H1 (cell line): ENCODE measurements at regions of chr2 and their contacts with region 1.

Region 1: DNA sequence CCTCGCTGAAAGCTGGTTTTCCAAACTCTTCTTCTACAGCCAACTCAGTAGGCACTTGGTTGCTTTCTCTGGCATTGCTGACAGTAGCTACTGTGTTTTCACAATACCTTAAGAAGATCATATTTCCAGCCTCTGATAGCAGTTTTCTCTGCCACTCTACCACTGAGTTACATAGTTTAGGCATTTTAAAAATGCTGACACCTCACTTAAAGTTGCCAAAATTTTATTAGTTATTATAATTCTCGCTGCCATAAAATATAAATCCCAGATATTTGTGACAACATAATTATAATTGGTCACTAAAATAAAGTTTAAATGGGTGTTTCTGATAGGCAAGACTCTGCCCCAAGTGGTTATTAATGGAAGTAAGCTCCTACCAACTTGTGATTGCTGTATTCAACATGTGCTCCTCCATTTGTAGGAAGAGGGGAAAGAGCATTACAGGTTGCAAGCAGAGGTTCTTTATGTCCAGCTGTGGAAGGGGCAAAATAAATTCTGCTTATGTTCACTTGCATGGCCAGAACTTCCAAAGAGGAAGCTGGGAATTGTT is 1202.8 kb downstream of the CNTNAP5 start:
- DNase-seq: no peak
- H3K4me3 ChIP-seq: no peak overlapping the region
- H3K27ac ChIP-seq: no peak overlapping the region
- H3K4me1 ChIP-seq: no peaks in the 10 kb centered on the region
- H3K27me3 ChIP-seq: no peaks in the 10 kb centered on the region
- CTCF ChIP-seq: peak in 1 of 3 experiments; percentile 52; a peak in 2 of 4 replicates
- EP300 ChIP-seq: no peak
- POLR2A ChIP-seq: no peak
- RAD21 ChIP-seq: peak; percentile 3 to 22; a peak in 2 of 4 replicates

Region 2: DNA sequence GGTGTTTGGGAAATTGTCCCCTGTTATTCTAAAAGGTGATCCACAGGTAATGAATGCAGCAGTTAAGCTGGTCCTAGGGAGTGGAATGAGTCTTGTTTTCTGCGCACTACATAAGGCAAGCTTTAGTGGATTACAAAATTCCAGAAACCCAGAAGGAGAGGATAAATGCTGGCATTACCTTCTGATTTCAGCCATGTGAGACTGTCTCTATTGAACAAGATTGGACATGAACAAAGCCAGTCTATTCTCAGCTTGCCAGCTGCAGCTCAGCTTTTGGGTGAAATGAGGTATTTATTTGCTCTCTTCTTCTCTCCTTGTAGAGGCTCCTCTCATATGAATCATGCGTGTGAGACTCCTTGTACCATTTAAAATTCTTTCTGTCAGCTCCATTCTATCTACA is 257.9 kb before region 1 on chr2:
- CTCF ChIA-PET with region 1: no interaction called
- POLR2A ChIA-PET with region 1: no interaction called
- DNase-seq: no peak
- H3K4me3 ChIP-seq: no peak overlapping the region
- H3K27ac ChIP-seq: no peak overlapping the region
- H3K4me1 ChIP-seq: no peaks in the 10 kb centered on the region
- H3K27me3 ChIP-seq: no peaks in the 10 kb centered on the region
- CTCF ChIP-seq: no peak
- EP300 ChIP-seq: no peak
- POLR2A ChIP-seq: no peak
- RAD21 ChIP-seq: no peak

Region 3: DNA sequence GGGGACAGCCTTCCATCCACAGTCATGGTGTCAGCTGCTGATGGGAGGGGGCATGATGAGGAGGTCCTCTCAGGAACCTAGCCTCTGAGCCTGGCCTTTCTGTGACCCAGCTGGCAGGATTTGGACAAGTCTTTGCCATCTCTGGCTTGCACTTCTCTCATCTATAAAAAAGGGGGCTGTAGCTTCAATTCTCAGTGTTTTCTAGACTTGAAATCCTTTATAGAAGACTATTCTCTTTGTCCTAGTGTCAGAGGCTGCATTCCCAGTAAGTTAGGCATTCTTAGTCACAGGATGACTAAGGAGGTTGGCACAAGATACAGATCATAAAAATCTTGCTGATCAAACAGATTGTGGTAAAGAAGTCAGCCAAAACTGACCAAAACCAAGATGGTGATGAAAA is 244.3 kb before region 1 on chr2:
- CTCF ChIA-PET with region 1: no interaction called
- POLR2A ChIA-PET with region 1: no interaction called
- DNase-seq: no peak
- H3K4me3 ChIP-seq: no peak overlapping the region
- H3K27ac ChIP-seq: no peak overlapping the region
- H3K4me1 ChIP-seq: no peaks in the 10 kb centered on the region
- H3K27me3 ChIP-seq: no peaks in the 10 kb centered on the region
- CTCF ChIP-seq: no peak
- EP300 ChIP-seq: no peak
- POLR2A ChIP-seq: no peak
- RAD21 ChIP-seq: no peak

Region 4: DNA sequence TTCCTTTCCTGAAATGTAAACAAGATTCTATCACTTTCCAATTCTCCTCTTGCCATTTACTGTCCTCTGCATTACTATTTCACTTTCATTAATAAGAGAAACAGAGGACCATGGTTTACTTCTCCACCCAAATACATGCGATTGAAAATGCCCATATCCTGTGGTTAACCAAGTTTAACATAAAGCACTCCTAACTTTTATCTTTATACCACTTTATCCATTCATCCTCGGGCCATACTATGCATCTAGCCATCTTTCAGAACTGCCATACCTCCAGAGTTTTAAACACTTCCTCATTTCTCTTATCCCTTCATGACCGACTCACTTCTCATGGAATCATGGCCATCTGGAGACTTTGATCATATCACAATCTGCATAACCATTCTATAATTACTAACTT is 20.5 kb before region 1 on chr2:
- CTCF ChIA-PET with region 1: interaction called, 10 read pairs
- POLR2A ChIA-PET with region 1: no interaction called
- DNase-seq: no peak
- H3K4me3 ChIP-seq: no peak overlapping the region
- H3K27ac ChIP-seq: no peak overlapping the region
- H3K4me1 ChIP-seq: 0 out of 7 replicates have a peak, but pooled peaks cover 0 to 2% (median 0%) of the 10 kb centered on the region in 4 experiments
- H3K27me3 ChIP-seq: no peaks in the 10 kb centered on the region
- CTCF ChIP-seq: no peak
- EP300 ChIP-seq: no peak
- POLR2A ChIP-seq: no peak
- RAD21 ChIP-seq: no peak

Region 5: DNA sequence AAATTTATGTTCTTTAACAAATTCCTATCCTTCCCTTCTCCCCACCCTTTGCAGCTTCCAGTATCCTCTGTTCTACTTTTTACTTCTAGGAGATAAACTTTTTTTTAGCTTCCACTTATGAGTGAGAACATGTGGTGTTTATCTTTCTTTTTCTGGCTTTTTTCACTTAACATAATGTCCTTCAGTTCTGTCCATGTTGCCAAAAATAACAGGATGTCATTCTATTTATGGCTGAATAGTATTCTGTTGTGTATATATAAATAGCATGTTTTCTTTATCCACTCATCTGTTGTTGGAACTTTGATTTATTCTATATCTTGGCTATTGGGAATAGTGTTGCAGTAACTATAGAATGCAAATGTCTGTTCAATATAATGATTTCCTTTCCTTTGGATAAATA is 11.6 kb before region 1 on chr2:
- CTCF ChIA-PET with region 1: interaction called, 12 read pairs
- POLR2A ChIA-PET with region 1: no interaction called
- DNase-seq: no peak
- H3K4me3 ChIP-seq: no peak overlapping the region
- H3K27ac ChIP-seq: no peak overlapping the region
- H3K4me1 ChIP-seq: no peaks in the 10 kb centered on the region
- H3K27me3 ChIP-seq: no peaks in the 10 kb centered on the region
- CTCF ChIP-seq: no peak
- EP300 ChIP-seq: no peak
- POLR2A ChIP-seq: no peak
- RAD21 ChIP-seq: no peak

Region 6: GRCh38 chr2:125240873-125241272 is 13.0 kb after region 1 on chr2:
- CTCF ChIA-PET with region 1: interaction called, 11 read pairs
- POLR2A ChIA-PET with region 1: no interaction called
- DNase-seq: no peak
- H3K4me3 ChIP-seq: no peak overlapping the region; a peak in 2 of 8 replicates
- H3K27ac ChIP-seq: no peak overlapping the region
- H3K4me1 ChIP-seq: no peaks in the 10 kb centered on the region
- H3K27me3 ChIP-seq: no peaks in the 10 kb centered on the region
- CTCF ChIP-seq: no peak
- EP300 ChIP-seq: no peak
- POLR2A ChIP-seq: no peak
- RAD21 ChIP-seq: no peak